ENCODE measurements at regions of chr7 and their contacts with region 1.

Region 1: DNA sequence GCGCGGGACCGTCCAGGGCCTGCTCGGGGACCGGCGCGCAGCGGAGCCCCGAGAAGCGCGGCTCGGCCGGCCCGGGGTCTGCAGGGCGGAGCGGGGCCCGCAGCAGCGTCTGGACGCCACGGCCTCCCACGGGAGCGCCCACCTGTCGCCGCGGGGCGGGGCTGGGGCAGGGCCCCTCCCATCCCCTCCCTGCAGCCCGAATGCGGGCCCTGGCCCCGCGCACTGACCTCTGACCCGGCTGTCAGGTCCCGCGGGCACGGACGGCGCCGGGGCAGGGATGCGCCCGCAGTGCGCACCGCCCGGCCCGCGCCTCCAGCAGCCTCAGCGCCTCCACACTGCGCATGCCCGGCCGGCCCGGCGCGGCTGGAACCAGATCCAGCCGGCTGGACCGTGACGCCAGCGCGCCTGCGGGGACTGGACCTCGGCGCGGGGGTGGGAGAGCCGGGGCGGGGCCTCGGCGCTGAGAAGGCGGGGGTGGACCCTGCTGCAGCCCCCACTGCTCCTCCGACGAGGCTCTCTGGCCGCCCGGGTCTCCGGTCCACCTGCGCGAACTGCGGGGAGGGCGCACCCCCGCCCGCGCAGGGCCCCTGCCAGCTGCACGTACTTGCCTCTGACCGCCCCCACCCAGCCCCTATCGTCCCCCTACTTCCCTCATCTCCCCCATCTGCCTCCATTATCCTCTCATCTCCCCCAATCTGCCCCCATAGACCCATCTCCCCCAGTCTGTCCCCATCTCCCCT is 16.1 kb upstream of the GPR146 start:
- DNase-seq: peak; percentile 88
- H3K4me3 ChIP-seq: peak overlapping the region; percentile 65 to 72 (median 66)
- H3K27ac ChIP-seq: peak overlapping the region; percentile 49
- H3K4me1 ChIP-seq: peaks cover 19% of the 10 kb centered on the region
- H3K27me3 ChIP-seq: no peaks in the 10 kb centered on the region
- CTCF ChIP-seq: no peak

Region 2: DNA sequence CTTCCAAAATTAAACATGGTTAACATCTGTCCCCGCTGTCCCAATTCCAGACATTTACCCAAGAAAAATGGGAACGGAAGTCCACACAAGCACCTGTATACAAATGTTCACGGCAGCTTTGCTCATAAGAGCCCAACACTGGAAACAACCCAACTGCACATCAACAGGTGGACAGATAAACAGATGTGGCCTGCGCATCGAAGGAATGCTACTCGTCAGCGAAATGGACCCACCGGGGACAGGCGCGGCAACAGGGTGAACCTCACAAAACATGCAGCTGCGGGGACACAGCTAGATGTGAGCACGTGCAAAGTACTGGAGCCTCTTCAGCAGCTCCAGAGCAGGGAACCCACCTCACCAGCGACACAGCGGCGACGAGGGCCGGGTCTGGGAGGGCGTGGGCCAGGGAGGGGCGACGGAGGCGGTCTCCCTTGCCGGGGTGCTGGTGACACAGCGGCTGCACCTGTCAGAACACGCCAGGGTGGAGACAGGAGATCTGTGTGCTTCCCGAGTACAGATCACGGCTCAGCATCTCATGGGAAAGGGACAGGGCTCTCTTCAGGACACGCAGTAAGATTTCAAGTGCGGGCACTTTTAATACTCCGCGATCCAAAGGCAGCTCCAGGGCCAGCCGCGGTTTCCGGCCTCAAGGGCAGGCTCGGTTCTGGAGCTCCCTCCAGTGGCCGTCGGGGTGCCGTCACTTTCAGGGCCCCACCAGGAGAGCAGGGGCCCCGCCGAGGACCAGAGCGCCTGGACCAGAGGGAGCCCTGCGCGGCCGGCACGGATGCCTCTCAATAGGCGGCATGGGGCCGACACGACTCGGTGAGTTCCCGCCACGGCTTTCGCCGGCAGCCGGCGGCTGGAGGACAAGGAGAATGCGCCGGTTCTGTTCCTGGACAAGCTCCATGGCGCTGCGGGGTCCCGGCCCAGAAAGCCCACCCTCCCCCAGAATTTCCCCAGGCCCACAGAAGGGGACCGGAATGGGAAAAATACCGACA is 37.4 kb after region 1 on chr7:
- CTCF ChIA-PET with region 1: no interaction called
- dilution Hi-C with region 1: no loop called
- in situ Hi-C with region 1: no loop called
- intact Hi-C with region 1: loop called (anchors 5 kb)
- DNase-seq: peak; percentile 44
- H3K4me3 ChIP-seq: peak overlapping the region in 1 of 3 experiments; percentile 21
- H3K27ac ChIP-seq: no peak overlapping the region
- H3K4me1 ChIP-seq: peaks cover 14% of the 10 kb centered on the region
- H3K27me3 ChIP-seq: no peaks in the 10 kb centered on the region
- CTCF ChIP-seq: peak; percentile 59 to 90